Activated CD4-positive, alpha-beta memory T cell treated with anti-CD3 and anti-CD28 coated beads for 36 hours (primary cell): ENCODE measurements at regions of chr7 and their contacts with region 1.

Region 1: GRCh38 chr7:12490117-12490688 is 80.3 kb upstream of the SCIN start:
- DNase-seq: no peak
- H3K4me3 Mint-ChIP-seq: no peak overlapping the region
- H3K27ac Mint-ChIP-seq: no peak overlapping the region
- H3K4me1 Mint-ChIP-seq: no peaks in the 10 kb centered on the region
- H3K27me3 Mint-ChIP-seq: no peaks in the 10 kb centered on the region

Region 2: GRCh38 chr7:11427686-11428273 is 1062.4 kb before region 1 on chr7:
- CTCF ChIA-PET with region 1: interaction called, 4 read pairs
- POLR2A ChIA-PET with region 1: no interaction called
- intact Hi-C with region 1: loop called (anchors 5 kb)
- DNase-seq: no peak
- H3K4me3 Mint-ChIP-seq: no peak overlapping the region
- H3K27ac Mint-ChIP-seq: no peak overlapping the region
- H3K4me1 Mint-ChIP-seq: no peaks in the 10 kb centered on the region
- H3K27me3 Mint-ChIP-seq: no peaks in the 10 kb centered on the region

Region 3: GRCh38 chr7:12291870-12292269 is 198.3 kb before region 1 on chr7:
- CTCF ChIA-PET with region 1: no interaction called
- POLR2A ChIA-PET with region 1: no interaction called
- intact Hi-C with region 1: no loop called
- DNase-seq: no peak
- H3K4me3 Mint-ChIP-seq: no peak overlapping the region
- H3K27ac Mint-ChIP-seq: no peak overlapping the region
- H3K4me1 Mint-ChIP-seq: no peaks in the 10 kb centered on the region
- H3K27me3 Mint-ChIP-seq: peaks cover 2% of the 10 kb centered on the region

Region 4: DNA sequence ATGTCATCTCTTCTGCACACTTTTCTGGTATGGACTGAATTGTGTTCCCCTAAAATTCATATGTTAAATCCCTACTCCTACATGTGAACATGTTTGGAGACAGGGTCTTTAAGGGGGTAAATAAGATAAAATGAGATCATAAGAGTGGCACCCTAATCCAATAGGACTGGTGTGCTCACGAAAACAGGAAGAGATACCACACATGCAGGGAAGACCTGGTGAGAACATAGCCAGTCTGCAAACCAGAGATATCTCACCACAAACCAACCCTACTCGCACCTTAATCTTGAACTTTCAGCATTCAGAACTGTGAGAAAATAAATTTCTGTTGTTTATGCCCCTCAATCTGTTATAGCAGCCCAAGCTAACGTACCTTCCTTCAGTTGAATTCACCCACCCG is 138.4 kb before region 1 on chr7:
- CTCF ChIA-PET with region 1: no interaction called
- POLR2A ChIA-PET with region 1: no interaction called
- intact Hi-C with region 1: no loop called
- DNase-seq: no peak
- H3K4me3 Mint-ChIP-seq: no peak overlapping the region
- H3K27ac Mint-ChIP-seq: no peak overlapping the region
- H3K4me1 Mint-ChIP-seq: no peaks in the 10 kb centered on the region
- H3K27me3 Mint-ChIP-seq: no peaks in the 10 kb centered on the region

Region 5: DNA sequence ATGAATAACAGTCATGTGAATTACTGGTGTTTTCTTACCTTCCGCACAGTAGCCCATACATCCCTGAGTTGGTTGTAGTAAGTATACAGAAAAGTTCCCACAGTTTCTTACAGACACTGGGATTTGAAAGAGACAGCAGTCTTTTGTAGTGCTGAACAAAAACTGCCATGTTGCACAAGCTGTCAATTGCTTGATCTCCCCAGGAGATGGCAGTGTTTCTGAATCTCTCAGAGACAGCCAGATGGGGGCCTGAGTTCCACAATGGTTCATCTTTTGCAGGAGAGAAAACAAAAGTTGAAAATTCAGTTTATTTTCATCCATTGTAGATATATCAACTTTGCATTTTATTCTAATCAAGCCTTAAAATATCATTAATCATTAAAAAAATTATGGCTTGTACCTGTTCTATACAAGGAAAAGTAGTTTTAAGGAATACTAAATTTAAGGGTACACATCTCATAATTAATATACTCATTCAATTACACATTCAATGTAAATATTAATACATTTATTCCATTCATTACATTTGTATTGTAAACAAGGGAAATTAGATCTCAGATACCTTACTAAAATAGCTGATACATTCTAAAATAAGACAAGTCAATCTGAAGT is 101.0 kb before region 1 on chr7:
- CTCF ChIA-PET with region 1: interaction called, 16 read pairs
- POLR2A ChIA-PET with region 1: no interaction called
- intact Hi-C with region 1: loop called (anchors 1 kb)
- DNase-seq: peak; percentile 48
- H3K4me3 Mint-ChIP-seq: no peak overlapping the region
- H3K27ac Mint-ChIP-seq: no peak overlapping the region
- H3K4me1 Mint-ChIP-seq: no peaks in the 10 kb centered on the region
- H3K27me3 Mint-ChIP-seq: no peaks in the 10 kb centered on the region

Region 6: DNA sequence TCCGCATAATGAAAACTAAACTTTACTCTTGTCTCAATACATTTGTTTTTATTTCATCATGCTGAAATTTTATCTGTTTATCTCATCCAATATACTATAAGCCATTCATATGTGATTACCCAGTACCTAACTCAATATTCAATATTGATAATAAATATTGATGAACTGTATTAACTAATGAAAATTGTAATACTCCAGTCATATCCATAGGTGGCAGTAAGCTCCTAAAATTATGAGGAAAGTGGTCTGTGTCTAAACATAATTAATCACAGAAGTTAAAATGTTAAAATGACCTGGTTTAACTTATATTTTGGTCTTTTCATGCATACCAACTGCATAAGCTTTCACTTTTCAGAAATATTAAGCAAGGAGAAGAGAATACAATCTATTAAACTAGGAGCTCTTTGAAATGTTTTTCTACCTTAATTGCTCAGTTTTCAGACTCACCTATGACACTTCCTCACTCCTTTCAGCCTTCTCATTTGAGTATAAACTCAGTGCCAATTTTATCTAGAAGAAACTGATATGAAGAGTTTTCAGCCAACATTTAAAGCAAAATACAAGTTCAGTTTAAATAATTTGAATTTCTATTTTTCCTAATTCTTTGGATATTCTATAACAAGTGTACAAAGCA is 56.1 kb before region 1 on chr7:
- CTCF ChIA-PET with region 1: interaction called, 17 read pairs
- POLR2A ChIA-PET with region 1: no interaction called
- intact Hi-C with region 1: loop called (anchors 2 kb)
- DNase-seq: no peak
- H3K4me3 Mint-ChIP-seq: no peak overlapping the region
- H3K27ac Mint-ChIP-seq: no peak overlapping the region
- H3K4me1 Mint-ChIP-seq: no peaks in the 10 kb centered on the region
- H3K27me3 Mint-ChIP-seq: peaks cover 14% of the 10 kb centered on the region

Region 7: GRCh38 chr7:12475362-12476063 is 14.7 kb before region 1 on chr7:
- CTCF ChIA-PET with region 1: interaction called, 19 read pairs
- POLR2A ChIA-PET with region 1: no interaction called
- intact Hi-C with region 1: no loop called
- DNase-seq: no peak
- H3K4me3 Mint-ChIP-seq: no peak overlapping the region
- H3K27ac Mint-ChIP-seq: no peak overlapping the region
- H3K4me1 Mint-ChIP-seq: no peaks in the 10 kb centered on the region
- H3K27me3 Mint-ChIP-seq: no peaks in the 10 kb centered on the region